ENCODE measurements at regions of chrX and their contacts with region 1.

Region 1: DNA sequence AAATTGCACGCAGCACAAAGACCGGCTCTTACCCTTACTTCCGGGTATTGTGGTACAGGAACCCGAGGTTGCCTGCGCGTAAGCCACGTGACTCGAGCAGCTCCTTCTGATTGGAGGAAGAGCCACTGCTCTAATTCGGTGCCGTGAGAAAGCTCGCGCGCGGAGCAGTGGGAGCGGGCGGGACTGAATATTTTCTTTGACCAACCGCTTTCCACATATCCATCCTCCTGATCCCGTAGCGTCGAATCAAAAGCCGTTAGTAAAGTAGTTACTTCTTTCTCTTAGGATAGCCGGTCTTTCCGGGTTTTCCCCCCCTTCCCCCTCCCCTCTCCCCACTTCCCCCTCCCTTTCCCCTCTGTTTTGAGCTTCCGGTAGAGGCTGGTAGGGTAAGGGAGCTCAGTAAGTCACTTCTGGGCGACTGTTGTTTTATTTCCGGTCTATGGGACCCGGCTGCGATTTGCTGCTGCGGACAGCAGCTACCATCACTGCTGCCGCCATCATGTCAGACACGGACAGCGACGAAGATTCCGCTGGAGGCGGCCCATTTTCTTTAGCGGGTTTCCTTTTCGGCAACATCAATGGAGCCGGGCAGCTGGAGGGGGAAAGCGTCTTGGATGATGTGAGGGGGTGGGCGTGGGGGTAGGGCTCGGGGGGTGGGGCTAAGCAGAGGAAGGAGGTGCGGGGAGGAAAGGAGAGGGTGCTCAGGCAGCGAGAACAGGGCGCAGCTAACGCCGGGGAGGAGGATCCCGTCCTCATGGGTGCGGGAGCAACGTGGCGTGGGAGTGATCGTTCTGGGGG is at the start of gene TAF1:
- DNase-seq: peak; percentile 89 to 95
- ATAC-seq: peak; percentile 94 to 98 (median 96)
- H3K4me3 ChIP-seq: peak within 1 kb of the TSS; percentile 37 to 88 (median 68)
- H3K27ac ChIP-seq: peak within 1 kb of the TSS; percentile 80 to 96 (median 92)
- H3K4me1 ChIP-seq: peaks cover 0 to 33% (median 13%) of the 10 kb centered on the region in 9 donors
- H3K27me3 ChIP-seq: no peaks in the 10 kb centered on the region
- CTCF ChIP-seq: no peak
- total RNA-seq, gene TAF1: 16.1 to 27.1 (median 21.6) TPM

Region 2: DNA sequence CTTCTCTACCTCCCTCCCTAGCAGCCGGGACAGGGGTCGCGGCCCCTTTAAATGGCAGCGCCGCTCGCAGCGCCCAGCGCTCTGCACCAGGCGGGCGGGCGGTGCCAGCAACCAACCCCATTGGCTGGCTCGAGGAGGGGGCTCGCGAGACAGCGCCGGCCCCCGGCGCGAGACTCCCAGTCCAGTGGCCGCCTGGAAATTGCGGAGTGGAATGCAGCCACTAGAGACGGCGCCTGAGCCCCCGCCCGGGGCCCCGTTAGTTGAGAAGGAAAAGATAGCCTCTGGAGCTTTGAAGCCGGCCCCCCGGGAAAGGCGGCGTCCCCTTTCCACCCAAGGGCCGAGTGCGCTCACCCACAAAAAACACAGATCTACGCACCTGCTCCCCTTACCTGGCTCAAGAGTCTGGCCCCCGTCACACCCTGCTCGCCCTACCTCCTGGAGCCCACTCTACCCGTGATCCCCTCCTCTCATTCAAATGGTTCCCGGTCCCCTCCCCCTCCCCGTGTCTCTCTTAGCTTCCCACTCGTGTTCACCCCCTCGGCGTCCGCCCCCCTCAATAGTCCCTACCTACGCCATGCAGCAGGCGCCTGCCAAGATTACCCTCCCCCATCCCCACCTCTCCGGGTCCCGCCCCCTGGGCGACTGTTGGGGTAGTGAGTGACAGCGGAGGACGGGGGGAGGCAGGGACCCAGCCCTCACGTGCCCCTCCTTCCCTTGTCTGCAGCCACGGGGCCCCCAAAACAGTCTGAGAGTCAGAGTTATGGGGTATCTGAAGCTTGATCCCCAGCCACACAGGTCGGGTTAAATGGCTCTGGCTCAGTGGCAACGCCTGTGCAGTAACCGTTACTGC is 111.8 kb before region 1 on chrX and contains the start of gene ZMYM3:
- intact Hi-C with region 1: loop called in 2 of 10 experiments (anchors 5 to 10 kb)
- DNase-seq: peak; percentile 84 to 87
- ATAC-seq: peak; percentile 94 to 98 (median 97)
- H3K4me3 ChIP-seq: peak within 1 kb of the TSS; percentile 40 to 83 (median 72)
- H3K27ac ChIP-seq: peak within 1 kb of the TSS; percentile 79 to 92 (median 87)
- H3K4me1 ChIP-seq: peaks cover 0 to 14% (median 6%) of the 10 kb centered on the region in 9 donors
- H3K27me3 ChIP-seq: peaks cover 0 to 11% (median 0%) of the 10 kb centered on the region in 7 donors
- CTCF ChIP-seq: no peak
- total RNA-seq, gene ZMYM3: 10.3 to 18.7 (median 16.5) TPM

Region 3: GRCh38 chrX:71283403-71284143 is 82.5 kb before region 1 on chrX and contains the start of gene NONO:
- intact Hi-C with region 1: loop called in 1 of 10 experiments (anchors 10 kb)
- DNase-seq: peak; percentile 74 to 95
- ATAC-seq: peak; percentile 91 to 98 (median 96)
- H3K4me3 ChIP-seq: peak within 1 kb of the TSS; percentile 41 to 81 (median 72)
- H3K27ac ChIP-seq: peak within 1 kb of the TSS; percentile 76 to 96 (median 90)
- H3K4me1 ChIP-seq: peaks cover 0 to 37% (median 28%) of the 10 kb centered on the region in 9 donors
- H3K27me3 ChIP-seq: no peaks in the 10 kb centered on the region
- CTCF ChIP-seq: peak in 5 of 9 donors; percentile 13 to 47 (median 24)
- total RNA-seq, gene NONO: 99.3 to 145 (median 114) TPM